Activated CD8-positive, alpha-beta T cell treated with anti-CD3 and anti-CD28 coated beads for 36 hours (primary cell): ENCODE measurements at regions of chr19 and their contacts with region 1.

Region 1: DNA sequence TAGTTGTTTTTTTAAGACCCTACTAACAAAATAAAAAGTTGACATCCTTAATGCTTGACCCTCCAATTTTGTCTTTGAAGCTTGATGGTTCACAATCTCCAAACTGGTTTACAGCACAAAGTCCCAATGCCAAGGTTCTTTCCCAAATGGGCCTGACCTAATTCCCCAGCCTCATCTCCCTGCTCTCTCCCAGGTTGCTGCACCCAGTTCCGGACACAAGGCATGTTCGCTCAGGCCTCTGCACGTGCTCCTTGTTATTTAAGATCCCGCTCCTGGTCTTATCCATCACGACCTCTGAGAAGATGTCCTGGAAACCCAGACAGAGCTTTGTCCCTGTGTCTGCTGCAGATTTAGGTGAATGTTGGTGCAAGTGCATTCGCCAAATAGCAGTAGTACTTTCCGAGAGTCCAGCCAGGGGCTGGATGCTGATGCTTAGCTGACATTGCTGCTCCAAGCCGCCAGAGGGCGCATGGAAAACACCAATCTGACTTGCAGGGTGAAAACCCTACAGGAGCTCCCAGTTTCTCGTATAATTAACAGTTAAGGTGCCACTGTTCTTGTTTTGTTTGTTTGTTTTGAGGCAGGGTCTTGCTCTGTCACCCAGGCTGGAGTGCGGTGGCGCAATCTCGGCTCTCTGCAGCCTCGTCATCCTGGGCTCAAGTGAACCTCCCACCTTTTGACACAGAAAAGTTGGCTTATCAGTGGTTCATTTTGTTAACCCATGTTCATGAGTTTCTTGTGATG is 18.5 kb downstream of the LYPD3 start:
- DNase-seq: peak; percentile 84
- ATAC-seq: peak; percentile 91
- H3K4me3 Mint-ChIP-seq: no peak overlapping the region
- H3K27ac Mint-ChIP-seq: no peak overlapping the region
- H3K4me1 Mint-ChIP-seq: peaks cover 18% of the 10 kb centered on the region
- H3K27me3 Mint-ChIP-seq: no peaks in the 10 kb centered on the region
- CTCF ChIP-seq: peak; percentile 94

Region 2: DNA sequence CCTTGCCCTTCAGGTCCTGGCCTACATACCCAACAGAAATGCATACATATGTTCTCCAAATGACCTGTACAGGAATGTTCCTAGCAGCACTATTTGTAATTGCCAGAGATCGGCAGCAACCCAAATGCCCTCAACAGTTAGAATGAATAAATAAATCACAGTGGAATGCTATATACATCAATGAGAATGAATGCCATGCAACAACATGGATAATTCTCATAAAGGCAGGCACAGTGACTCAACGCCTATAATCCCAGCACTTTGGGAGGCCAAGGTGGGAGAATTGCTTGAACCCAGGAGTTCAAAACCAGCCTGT is 13.6 kb before region 1 on chr19:
- CTCF ChIA-PET with region 1: interaction called, 31 read pairs
- POLR2A ChIA-PET with region 1: no interaction called
- intact Hi-C with region 1: no loop called
- DNase-seq: no peak
- ATAC-seq: peak; percentile 17
- H3K4me3 Mint-ChIP-seq: no peak overlapping the region
- H3K27ac Mint-ChIP-seq: no peak overlapping the region
- H3K4me1 Mint-ChIP-seq: peaks cover 30% of the 10 kb centered on the region
- H3K27me3 Mint-ChIP-seq: no peaks in the 10 kb centered on the region
- CTCF ChIP-seq: no peak

Region 3: DNA sequence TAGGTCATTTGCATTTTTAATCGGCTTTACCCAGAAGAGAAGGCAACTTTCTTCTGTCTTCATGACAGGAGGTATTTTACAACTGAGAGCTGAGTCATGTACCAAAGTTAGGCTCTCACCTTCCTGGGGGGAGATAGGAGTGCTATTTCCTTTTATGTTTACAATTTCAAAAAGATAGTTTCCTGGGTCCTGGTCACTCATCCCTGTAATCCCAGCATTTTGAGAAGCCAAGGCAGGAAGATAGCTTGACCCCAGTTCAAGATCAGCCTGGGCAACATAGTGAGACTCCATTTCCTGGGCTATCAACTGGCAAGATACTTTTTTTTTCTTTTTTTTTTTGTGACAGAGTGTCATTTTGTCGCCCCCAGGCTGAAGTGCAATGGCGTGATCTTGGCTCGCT is 10.9 kb after region 1 on chr19:
- CTCF ChIA-PET with region 1: interaction called, 44 read pairs
- POLR2A ChIA-PET with region 1: interaction called, 4 read pairs
- intact Hi-C with region 1: no loop called
- DNase-seq: no peak
- ATAC-seq: no peak
- H3K4me3 Mint-ChIP-seq: no peak overlapping the region
- H3K27ac Mint-ChIP-seq: no peak overlapping the region
- H3K4me1 Mint-ChIP-seq: peaks cover 20% of the 10 kb centered on the region
- H3K27me3 Mint-ChIP-seq: no peaks in the 10 kb centered on the region
- CTCF ChIP-seq: no peak

Region 4: GRCh38 chr19:43463381-43464136 is 16.6 kb after region 1 on chr19:
- CTCF ChIA-PET with region 1: interaction called, 44 read pairs
- POLR2A ChIA-PET with region 1: interaction called, 4 read pairs
- intact Hi-C with region 1: no loop called
- DNase-seq: peak; percentile 100
- ATAC-seq: peak; percentile 87
- H3K4me3 Mint-ChIP-seq: peak overlapping the region; percentile 84
- H3K27ac Mint-ChIP-seq: peak overlapping the region; percentile 94
- H3K4me1 Mint-ChIP-seq: peaks cover 41% of the 10 kb centered on the region
- H3K27me3 Mint-ChIP-seq: no peaks in the 10 kb centered on the region
- CTCF ChIP-seq: no peak

Region 5: DNA sequence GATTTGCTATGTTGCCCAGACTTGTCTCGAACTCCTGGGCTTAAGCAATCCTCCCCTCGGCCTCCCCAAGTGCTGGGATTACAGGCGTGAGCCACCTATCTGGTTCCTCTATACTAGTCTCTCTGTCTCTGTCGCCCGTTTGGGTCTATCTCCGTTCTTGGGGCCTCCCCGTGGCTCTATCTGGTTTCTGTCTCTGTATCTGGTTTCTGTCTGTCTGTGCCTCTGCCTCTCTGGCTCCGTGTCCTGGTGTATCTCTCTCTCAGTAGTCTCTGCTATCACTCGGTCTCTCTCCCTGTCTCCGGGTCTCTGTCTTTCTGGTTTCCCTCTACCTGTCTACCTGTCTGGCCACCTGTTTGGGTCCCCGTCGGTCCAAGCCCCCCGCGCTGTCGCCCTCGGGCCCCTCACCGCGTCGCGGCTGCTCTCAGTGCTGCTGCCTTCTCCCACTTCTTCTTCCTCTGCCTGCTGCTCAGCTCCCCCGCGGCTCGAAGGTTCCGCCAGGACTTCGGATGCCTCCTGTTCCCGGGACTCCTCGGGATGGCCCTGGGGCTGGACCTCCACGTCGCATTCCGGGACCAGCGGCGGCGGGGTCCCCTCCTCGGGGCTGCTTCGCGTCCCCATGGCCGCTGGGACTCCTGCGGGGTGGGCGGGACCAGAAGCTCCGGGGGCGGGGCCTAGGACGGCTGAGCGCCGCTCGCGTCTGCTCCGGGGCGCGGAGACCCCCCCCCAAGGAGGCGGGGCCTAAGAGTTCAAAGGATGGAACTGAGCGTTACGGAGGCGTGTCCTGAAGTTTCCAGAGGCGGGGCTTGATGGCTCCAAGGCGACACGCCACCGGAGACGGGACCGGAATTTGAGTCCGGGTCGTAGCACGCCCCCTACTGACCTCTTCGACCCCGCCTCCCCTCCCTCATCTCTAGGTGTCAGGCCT is 56.8 kb after region 1 on chr19:
- CTCF ChIA-PET with region 1: interaction called, 39 read pairs
- POLR2A ChIA-PET with region 1: no interaction called
- intact Hi-C with region 1: no loop called
- DNase-seq: peak; percentile 100
- ATAC-seq: peak; percentile 97
- H3K4me3 Mint-ChIP-seq: peak overlapping the region; percentile 96
- H3K27ac Mint-ChIP-seq: peak overlapping the region; percentile 97
- H3K4me1 Mint-ChIP-seq: peaks cover 18% of the 10 kb centered on the region
- H3K27me3 Mint-ChIP-seq: no peaks in the 10 kb centered on the region
- CTCF ChIP-seq: no peak

Region 6: DNA sequence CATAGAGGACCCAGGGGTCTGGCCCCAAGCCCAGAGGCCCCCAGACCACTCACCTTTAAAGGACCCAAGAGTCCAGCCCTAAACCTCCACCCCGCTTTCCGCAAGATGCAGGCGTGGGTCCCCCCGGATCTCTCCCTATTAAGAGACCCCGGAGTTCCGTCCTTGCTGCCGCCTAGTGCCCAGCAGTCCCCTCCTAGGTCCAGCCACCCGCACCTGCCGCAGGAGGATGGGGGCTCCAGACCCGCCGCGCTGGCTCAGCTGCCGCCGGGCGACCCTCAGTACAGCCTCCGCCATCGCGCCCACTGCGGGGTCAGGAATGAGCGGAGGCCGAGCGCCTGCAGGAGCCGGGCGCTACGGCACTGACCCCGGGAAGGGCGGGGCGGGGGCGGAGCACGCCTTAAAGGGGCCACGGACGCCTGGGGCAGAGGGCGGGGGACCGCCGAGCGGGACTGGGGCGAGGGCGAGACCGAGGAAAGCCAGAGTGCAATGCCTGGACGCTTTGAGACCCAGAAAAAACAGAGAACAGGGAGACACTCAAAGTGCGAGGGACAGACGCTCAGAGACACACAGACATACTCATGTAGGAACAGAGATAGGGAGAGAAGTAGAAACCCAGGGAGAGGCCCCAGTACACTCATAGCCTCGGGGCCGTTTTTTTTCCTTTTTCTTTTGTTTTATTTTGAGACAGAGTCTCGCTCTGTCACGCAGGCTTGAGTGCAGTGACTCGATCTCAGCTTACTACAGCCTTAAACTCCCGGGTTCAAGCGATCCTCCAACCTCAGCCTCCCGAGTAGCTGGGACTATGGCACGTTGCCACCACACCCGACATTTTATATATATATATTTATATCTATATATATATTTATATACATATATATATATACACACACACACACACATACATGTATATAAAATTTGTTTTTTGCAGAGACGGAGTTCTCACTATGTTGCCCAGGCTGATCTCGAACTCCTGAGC is 80.3 kb after region 1 on chr19 and contains the start of gene ETHE1:
- CTCF ChIA-PET with region 1: interaction called, 328 read pairs
- POLR2A ChIA-PET with region 1: interaction called, 5 read pairs
- intact Hi-C with region 1: no loop called
- DNase-seq: peak; percentile 85
- ATAC-seq: peak; percentile 76
- H3K4me3 Mint-ChIP-seq: peak within 1 kb of the TSS; percentile 93
- H3K27ac Mint-ChIP-seq: peak within 1 kb of the TSS; percentile 97
- H3K4me1 Mint-ChIP-seq: peaks cover 25% of the 10 kb centered on the region
- H3K27me3 Mint-ChIP-seq: no peaks in the 10 kb centered on the region
- CTCF ChIP-seq: no peak
- total RNA-seq, gene ETHE1: 50.9 to 57.1 TPM

Region 7: GRCh38 chr19:43555185-43555770 is 108.4 kb after region 1 on chr19:
- CTCF ChIA-PET with region 1: interaction called, 16 read pairs
- POLR2A ChIA-PET with region 1: no interaction called
- intact Hi-C with region 1: no loop called
- DNase-seq: peak; percentile 91
- ATAC-seq: peak; percentile 99
- H3K4me3 Mint-ChIP-seq: no peak overlapping the region
- H3K27ac Mint-ChIP-seq: no peak overlapping the region
- H3K4me1 Mint-ChIP-seq: peaks cover 6% of the 10 kb centered on the region
- H3K27me3 Mint-ChIP-seq: no peaks in the 10 kb centered on the region
- CTCF ChIP-seq: peak; percentile 68